ENCODE measurements at regions of chr17 and their contacts with region 1.

Region 1: DNA sequence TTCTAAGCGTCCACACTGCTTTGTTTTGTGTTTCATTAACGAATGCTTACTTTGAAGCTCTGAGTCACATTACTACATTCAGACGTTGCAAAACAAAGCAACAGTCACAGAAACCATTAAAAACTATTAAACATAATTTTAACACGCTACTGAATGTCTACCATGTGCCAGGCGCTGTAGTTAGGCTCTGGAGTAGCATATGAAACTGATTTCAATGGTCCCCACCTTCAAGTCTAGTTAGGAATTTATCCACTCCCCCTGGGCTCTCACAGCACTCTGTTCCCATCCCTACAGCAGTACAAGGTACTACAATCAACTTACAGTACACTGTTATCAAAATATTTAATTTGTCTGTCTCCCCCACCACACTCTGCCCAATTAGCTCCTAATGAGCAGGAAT is 631 bp downstream of the UTP6 start:
- DNase-seq: no peak
- H3K4me3 Mint-ChIP-seq: no peak overlapping the region
- H3K27ac Mint-ChIP-seq: no peak overlapping the region
- H3K4me1 Mint-ChIP-seq: peaks cover 33% of the 10 kb centered on the region
- H3K27me3 Mint-ChIP-seq: no peaks in the 10 kb centered on the region

Region 2: DNA sequence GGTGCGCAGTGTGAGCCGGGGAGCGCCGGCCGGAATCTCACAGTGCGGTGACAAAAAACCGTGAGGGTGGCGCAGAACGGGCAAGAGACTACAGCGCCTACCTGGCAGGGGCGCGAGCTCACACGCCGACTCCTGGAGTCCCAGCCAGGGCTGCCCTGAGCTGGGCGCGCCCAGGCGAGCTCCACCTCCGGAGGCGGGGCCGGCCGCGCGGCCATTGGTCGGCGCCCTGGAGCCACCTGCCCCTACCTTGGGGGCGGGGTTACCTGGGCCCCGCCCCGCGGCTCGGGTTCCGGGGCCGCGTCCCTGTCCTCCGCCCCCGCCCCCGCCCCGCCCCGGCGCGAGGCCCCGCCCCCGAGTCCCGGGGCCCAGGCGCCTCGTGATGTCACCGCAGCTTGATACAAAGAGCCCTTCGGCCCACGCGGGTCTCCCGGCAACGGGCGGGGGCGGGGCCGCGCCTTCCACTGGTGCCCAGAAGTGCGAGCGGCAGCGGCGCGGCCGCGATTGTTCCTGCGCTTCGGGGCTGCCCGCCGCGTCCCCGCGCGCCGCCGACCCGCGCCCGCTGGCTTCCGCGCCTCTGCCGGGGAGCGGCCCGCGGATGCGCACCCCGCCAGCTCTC is 413.1 kb before region 1 on chr17:
- CTCF ChIA-PET with region 1: no interaction called
- intact Hi-C with region 1: loop called (anchors 1 kb)
- DNase-seq: peak; percentile 91
- H3K4me3 Mint-ChIP-seq: peak overlapping the region; percentile 81
- H3K27ac Mint-ChIP-seq: peak overlapping the region; percentile 34
- H3K4me1 Mint-ChIP-seq: peaks cover 45% of the 10 kb centered on the region
- H3K27me3 Mint-ChIP-seq: no peaks in the 10 kb centered on the region

Region 3: GRCh38 chr17:31549525-31550388 is 351.1 kb before region 1 on chr17:
- CTCF ChIA-PET with region 1: no interaction called
- intact Hi-C with region 1: loop called (anchors 1 kb)
- DNase-seq: peak; percentile 95
- H3K4me3 Mint-ChIP-seq: peak overlapping the region; percentile 87
- H3K27ac Mint-ChIP-seq: peak overlapping the region; percentile 87
- H3K4me1 Mint-ChIP-seq: peaks cover 23% of the 10 kb centered on the region
- H3K27me3 Mint-ChIP-seq: no peaks in the 10 kb centered on the region

Region 4: DNA sequence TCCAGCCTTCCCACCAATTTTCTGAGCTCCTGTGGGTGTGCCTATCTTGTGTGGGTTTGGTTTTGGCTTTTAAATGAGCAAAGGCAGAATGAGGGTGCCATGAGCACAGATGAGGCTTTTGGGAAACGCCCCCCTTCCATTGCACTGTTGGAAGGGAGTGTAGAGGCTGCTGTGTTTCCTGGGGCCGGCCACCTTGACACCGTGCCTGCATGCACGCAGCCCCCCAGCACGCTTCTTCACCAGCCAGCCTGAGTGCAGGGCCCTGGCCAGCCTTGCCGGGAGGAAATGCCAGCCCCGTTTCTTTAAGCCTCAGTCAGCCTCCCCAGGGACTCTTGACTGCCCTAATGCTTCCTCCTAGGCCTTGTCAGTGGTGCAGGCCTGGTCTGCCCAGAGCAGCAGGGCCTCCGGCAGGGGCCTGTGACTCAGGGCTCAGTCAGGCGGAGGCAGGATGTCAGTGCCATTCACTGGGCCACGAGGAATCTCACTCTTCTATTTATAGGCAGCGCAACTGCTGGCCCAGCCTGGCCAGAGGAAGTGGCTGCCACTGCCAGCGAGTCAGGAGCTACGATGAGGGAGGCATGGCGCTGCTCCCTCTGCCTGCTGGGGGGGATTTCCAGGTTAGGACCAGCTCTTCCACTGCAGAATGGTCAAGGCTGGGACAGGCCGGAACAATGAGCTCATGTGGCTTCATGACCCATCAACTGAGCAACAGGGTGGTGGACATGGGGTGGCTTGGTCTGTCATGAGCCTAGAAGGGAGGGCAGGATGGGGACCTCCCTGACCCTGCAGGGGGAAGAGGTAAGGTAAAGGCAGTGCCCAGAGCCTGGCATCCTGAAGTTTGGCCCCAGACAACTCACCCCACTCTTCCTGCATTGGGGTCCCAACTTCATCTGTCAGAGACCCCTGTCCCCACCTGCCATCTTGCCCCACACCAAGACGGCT is 304.2 kb before region 1 on chr17:
- CTCF ChIA-PET with region 1: no interaction called
- intact Hi-C with region 1: no loop called
- DNase-seq: peak; percentile 25
- H3K4me3 Mint-ChIP-seq: no peak overlapping the region
- H3K27ac Mint-ChIP-seq: no peak overlapping the region
- H3K4me1 Mint-ChIP-seq: no peaks in the 10 kb centered on the region
- H3K27me3 Mint-ChIP-seq: no peaks in the 10 kb centered on the region

Region 5: GRCh38 chr17:31778523-31778922 is 122.4 kb before region 1 on chr17:
- CTCF ChIA-PET with region 1: no interaction called
- intact Hi-C with region 1: no loop called
- DNase-seq: no peak
- H3K4me3 Mint-ChIP-seq: no peak overlapping the region
- H3K27ac Mint-ChIP-seq: no peak overlapping the region
- H3K4me1 Mint-ChIP-seq: no peaks in the 10 kb centered on the region
- H3K27me3 Mint-ChIP-seq: peaks cover 8% of the 10 kb centered on the region

Region 6: DNA sequence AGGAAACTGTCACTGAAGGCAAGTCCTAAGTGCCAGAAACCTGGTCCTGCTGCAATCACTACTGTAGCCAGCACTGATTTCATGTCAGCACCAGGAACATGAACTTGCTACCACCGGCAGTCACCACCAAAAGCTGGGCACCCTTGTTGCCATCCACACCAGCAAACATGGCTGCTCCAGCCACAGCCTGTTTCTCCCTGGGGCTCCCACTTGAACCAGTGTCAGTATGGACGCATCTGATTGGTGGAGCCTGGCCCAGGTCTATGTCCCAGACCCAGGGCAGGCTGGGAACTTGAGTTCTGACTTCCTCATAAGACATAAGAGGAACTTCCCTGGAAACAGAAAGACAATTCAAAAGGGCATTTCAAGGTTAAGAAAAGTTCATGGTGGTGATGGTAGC is 98.4 kb before region 1 on chr17:
- CTCF ChIA-PET with region 1: no interaction called
- intact Hi-C with region 1: no loop called
- DNase-seq: no peak
- H3K4me3 Mint-ChIP-seq: no peak overlapping the region
- H3K27ac Mint-ChIP-seq: no peak overlapping the region
- H3K4me1 Mint-ChIP-seq: no peaks in the 10 kb centered on the region
- H3K27me3 Mint-ChIP-seq: peaks cover 4% of the 10 kb centered on the region

Region 7: DNA sequence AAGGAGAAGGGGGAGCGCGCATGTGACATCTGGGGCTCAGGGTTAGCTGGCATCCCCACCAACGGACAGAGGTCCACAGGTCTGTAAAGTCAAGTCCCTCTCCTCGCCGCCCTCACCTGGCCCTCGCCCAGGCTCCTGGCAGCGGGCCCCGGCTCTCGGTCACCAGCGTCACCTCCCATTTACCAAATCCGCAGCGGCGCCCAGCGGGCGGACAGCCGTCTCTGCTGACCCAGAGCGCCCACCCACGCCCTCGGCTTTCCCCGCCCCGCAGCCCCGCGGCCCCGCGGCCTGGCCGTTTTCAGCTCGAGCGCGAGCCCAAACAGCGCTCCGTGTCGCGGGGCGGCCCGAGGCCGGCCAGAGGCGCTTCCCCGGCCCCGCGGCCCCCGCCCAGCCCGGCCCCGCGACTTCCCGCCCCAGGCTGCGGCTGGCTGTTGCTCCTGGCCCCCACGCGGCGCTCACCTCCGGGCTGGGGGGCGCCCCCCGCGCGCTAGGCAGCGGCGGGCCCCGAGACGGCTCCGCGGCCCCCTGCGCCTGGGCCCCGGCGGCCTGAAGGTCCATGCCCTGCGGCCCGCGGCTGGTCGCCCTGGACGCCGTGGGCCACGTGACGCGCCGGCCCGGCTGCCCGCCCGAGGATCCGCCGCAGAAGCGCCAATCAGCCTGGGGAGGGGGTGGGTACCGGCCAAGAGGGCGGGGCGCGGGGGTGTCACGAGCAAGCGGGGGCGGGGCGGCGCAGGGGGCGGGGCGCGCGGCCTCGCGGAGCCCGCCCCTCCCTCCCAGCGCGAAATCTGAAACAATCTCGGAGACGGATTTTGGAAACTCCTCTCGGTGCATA is 42.0 kb before region 1 on chr17 and contains the start of gene COPRS:
- CTCF ChIA-PET with region 1: interaction called, 4 read pairs
- intact Hi-C with region 1: loop called (anchors 1 kb)
- DNase-seq: peak; percentile 83
- H3K4me3 Mint-ChIP-seq: peak within 1 kb of the TSS; percentile 86
- H3K27ac Mint-ChIP-seq: peak within 1 kb of the TSS; percentile 42
- H3K4me1 Mint-ChIP-seq: peaks cover 17% of the 10 kb centered on the region
- H3K27me3 Mint-ChIP-seq: no peaks in the 10 kb centered on the region
- total RNA-seq, gene COPRS: 34.4 to 37.6 TPM

Region 8: DNA sequence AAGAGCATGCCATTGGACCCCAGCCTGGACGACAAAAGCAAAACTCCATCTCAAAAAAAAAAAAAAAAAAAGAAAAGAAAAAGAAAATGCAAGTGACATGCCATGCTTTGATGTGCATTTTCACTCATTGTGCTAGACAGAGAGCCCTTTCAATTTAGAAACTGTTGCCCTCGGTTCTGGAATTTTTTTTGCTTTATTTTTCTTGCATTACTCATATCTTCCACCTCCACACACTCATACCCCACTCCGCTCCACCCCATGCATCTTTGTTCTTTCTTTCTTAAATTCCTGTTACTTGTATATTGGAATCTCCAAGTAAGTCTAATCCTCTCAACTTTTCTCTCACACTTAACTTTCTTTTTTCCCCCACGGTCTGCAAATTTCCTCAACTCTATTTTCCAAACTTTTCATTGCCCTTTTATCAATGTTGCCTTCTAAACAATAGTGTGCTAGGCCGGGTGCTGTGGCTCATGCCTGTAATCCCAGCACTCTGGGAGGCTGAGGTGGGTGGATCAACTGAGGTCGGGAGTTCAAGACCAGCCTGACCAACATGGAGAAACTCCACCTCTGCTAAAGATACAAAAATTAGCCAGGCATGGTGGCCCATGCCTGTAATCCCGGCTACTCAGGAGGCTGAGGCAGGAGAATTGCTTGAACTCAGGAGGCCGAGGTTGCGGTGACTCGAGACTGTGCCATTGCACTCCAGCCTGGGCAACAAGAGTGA is 19.1 kb after region 1 on chr17:
- CTCF ChIA-PET with region 1: interaction called, 3 read pairs
- intact Hi-C with region 1: loop called (anchors 1 kb)
- DNase-seq: peak; percentile 61
- H3K4me3 Mint-ChIP-seq: peak overlapping the region; percentile 19
- H3K27ac Mint-ChIP-seq: peak overlapping the region; percentile 73
- H3K4me1 Mint-ChIP-seq: peaks cover 35% of the 10 kb centered on the region
- H3K27me3 Mint-ChIP-seq: peaks cover 18% of the 10 kb centered on the region

Region 9: GRCh38 chr17:32142038-32142856 is 241.4 kb after region 1 on chr17 and contains the start of gene RHOT1:
- CTCF ChIA-PET with region 1: no interaction called
- intact Hi-C with region 1: loop called (anchors 2 kb)
- DNase-seq: peak; percentile 67
- H3K4me3 Mint-ChIP-seq: peak within 1 kb of the TSS; percentile 91
- H3K27ac Mint-ChIP-seq: peak within 1 kb of the TSS; percentile 70
- H3K4me1 Mint-ChIP-seq: peaks cover 25% of the 10 kb centered on the region
- H3K27me3 Mint-ChIP-seq: no peaks in the 10 kb centered on the region
- total RNA-seq, gene RHOT1: 23.0 to 23.7 TPM